Posterior vena cava (tissue), 2 donors: ENCODE measurements at regions of chr11 and their contacts with region 1.

Region 1: GRCh38 chr11:66081505-66081904 is 11.4 kb downstream of the PACS1 start:
- DNase-seq: peak; percentile 87

Region 2: DNA sequence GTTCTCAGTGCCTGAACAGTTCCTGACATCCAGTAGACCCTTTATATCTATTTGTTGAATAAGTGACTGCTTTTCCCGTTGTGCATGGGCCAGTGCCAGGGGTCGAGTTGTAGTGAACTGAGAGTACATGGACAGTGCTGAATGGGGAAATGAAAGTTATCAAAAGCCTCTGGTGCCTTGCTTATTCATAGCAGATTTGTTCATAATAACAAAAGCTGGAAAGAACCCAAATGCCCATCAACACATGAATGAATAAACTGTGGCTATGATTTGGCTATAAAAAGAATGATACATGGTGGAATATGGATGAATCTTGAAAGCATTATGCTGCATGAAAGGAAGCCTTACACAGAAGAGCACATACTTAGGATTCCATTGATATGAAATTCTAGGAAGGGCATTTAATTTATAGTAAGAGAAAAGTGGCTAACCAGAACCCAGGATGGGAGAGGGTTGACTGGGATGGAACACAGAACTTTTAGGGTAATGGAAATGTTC is 31.1 kb after region 1 on chr11:
- intact Hi-C with region 1: no loop called
- DNase-seq: no peak

Region 3: DNA sequence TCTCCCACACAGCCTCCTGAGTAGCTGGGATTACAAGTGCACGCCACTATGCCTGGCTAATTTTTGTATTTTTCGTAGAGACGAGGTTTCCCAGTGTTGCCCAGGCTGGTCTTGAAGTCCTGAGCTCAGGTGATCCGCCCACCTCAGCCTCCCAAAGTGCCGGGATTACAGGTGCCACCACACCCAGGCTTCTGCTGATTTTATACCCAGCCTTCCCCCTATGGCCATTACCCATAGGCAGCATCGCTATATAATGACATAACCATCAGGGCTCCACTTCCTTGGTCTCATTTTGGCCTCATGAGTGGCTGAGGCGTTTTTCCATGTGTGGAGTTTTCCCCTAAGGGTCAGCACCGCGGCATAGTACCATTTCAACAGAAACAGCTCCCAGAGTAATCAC is 126.4 kb after region 1 on chr11:
- intact Hi-C with region 1: loop called in 1 of 2 experiments (anchors 10 kb)
- DNase-seq: no peak